AG04450 (cell line): ENCODE measurements at regions of chr10 and their contacts with region 1.

Region 1: GRCh38 chr10:93680412-93681047 is 21.9 kb downstream of the FRA10AC1 start:
- DNase-seq: no peak
- H3K4me3 ChIP-seq: no peak overlapping the region
- H3K27ac ChIP-seq: no peak overlapping the region
- H3K27me3 ChIP-seq: no peaks in the 10 kb centered on the region
- CTCF ChIP-seq: peak; percentile 45; the same call in 1 of the 2 replicates

Region 2: DNA sequence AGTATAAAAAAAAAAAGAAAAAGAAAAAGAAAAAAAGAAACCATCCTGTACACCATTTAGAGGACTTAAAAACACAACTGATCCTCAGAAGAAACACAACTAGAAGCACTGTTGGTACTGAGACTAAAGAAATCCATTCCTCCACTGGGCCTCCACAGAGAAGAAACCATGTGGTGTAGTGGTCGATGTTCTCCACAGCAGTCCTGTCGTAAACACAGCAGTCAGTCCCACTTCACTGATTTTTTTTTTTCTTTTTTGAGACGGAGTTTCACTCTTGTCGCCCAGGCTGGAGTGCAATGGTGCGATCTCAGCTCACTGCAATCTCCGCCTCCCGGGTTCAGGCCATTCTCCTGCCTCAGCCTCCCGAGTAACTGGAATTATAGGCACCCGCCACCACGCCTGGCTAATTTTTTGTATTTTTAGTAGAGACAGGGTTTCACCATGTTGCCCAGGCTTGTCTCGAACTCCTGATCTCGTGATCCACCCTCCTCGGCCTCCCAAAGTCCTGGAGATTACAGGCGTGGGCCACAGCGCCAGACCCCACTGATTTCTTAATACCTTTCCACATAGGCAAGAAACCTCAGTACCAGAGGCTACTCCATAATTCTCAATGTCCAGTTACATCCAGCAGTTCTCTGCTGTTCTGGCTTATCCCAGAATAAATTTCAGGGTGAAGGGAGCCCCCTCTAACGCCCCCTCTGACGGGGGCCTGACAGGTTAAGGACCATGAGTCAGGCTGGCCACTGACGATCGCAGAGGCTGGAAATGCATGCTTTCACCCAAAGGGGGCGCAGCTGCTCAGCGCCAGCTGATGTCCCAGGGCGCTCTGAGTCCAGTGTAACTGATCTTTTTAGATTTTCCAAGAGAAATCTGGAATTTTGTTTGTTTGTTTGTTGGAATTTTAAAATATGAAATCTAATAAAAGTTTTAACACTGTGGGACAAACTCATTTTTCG is 138.8 kb before region 1 on chr10:
- CTCF ChIA-PET with region 1: interaction called, 37 read pairs
- POLR2A ChIA-PET with region 1: no interaction called
- DNase-seq: no peak
- H3K4me3 ChIP-seq: peak overlapping the region; percentile 31
- H3K27ac ChIP-seq: no peak overlapping the region
- H3K27me3 ChIP-seq: peaks cover 4% of the 10 kb centered on the region
- CTCF ChIP-seq: peak; percentile 89

Region 3: DNA sequence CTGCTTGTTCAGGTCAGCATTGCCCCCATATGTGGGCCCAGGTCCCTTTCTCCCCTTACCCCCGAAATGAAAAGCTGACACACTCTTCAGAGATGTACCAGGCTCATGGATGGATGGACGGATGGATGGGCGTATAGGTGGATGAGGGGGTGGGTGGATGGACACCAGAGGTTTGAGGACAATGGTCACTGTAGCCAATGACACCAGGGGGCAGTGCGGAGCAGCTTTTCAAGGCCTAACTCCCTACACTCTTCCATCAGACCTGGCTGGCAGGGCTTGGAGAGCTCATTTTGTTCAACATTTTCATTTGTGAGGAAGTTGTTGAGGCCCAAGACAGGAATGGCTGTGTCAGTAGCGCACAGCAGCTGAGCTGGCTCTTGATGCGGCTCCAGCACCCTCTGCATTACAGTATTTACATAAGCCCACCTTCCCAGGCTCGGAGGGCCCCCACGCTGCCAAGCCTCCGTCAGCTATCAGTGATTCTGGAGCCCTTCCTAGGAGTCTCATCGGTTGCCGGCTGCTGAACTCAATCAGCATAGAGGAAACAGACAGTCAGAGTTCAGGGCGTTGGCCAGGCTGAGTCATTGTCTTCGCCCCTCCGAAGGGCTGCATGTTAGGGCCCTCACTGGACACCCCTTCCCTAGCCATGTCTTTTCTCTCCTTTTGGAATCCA is 125.6 kb before region 1 on chr10:
- CTCF ChIA-PET with region 1: interaction called, 101 read pairs
- POLR2A ChIA-PET with region 1: interaction called, 3 read pairs
- DNase-seq: no peak
- H3K4me3 ChIP-seq: no peak overlapping the region
- H3K27ac ChIP-seq: no peak overlapping the region
- H3K27me3 ChIP-seq: peaks cover 3% of the 10 kb centered on the region
- CTCF ChIP-seq: peak; percentile 66

Region 4: DNA sequence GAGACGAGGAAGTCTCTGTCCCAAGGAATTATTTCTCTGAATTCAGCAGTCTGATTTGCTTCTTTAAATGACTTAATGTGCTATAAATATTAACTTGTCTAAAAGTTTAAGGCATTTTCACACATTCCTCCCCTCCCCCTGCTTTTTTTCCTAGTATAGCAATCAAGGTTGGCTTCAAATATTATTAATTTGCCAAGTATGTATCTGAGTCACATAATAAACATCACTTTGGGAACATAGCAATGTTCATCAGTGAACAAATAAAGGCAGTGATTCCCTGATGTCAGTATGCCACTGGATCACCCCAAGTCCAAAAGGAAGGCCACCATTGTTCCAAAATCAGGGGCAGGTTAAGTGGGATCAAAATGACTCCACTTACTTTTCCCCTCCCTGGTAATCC is 27.7 kb before region 1 on chr10:
- CTCF ChIA-PET with region 1: no interaction called
- POLR2A ChIA-PET with region 1: no interaction called
- DNase-seq: no peak
- H3K4me3 ChIP-seq: no peak overlapping the region
- H3K27ac ChIP-seq: no peak overlapping the region
- H3K27me3 ChIP-seq: no peaks in the 10 kb centered on the region
- CTCF ChIP-seq: no peak

Region 5: GRCh38 chr10:93702211-93703001 is 21.9 kb after region 1 on chr10 and contains the start of gene FRA10AC1:
- CTCF ChIA-PET with region 1: interaction called, 12 read pairs
- POLR2A ChIA-PET with region 1: no interaction called
- DNase-seq: peak; percentile 86
- H3K4me3 ChIP-seq: peak within 1 kb of the TSS; percentile 92
- H3K27ac ChIP-seq: peak within 1 kb of the TSS; percentile 89
- H3K27me3 ChIP-seq: peaks cover 7% of the 10 kb centered on the region
- CTCF ChIP-seq: peak; percentile 40
- polyA plus RNA-seq, gene FRA10AC1: 7.0 and 12.1 TPM in 2 replicates

Region 6: GRCh38 chr10:93826355-93826754 is 145.8 kb after region 1 on chr10:
- CTCF ChIA-PET with region 1: no interaction called
- POLR2A ChIA-PET with region 1: no interaction called
- DNase-seq: no peak
- H3K4me3 ChIP-seq: no peak overlapping the region
- H3K27ac ChIP-seq: no peak overlapping the region
- H3K27me3 ChIP-seq: peaks cover 2% of the 10 kb centered on the region
- CTCF ChIP-seq: no peak